Gastrocnemius medialis (tissue), 4 donors: ENCODE measurements at regions of chr2 and their contacts with region 1.

Region 1: GRCh38 chr2:20578895-20579825 is 71.7 kb downstream of the HS1BP3 start:
- DNase-seq: peak; percentile 87 to 89
- ATAC-seq: peak; percentile 94 to 95
- H3K4me3 ChIP-seq: peak overlapping the region in 1 of 4 donors; percentile 10
- H3K27ac ChIP-seq: peak overlapping the region; percentile 80 to 91 (median 82)
- H3K4me1 ChIP-seq: peaks cover 38 to 55% of the 10 kb centered on the region in 2 donors
- H3K27me3 ChIP-seq: no peaks in the 10 kb centered on the region
- CTCF ChIP-seq: no peak
- POLR2A ChIP-seq: no peak

Region 2: GRCh38 chr2:20198001-20198400 is 381.2 kb before region 1 on chr2:
- in situ Hi-C with region 1: no loop called
- intact Hi-C with region 1: no loop called
- DNase-seq: no peak
- ATAC-seq: no peak
- H3K4me3 ChIP-seq: no peak overlapping the region
- H3K27ac ChIP-seq: no peak overlapping the region
- H3K4me1 ChIP-seq: no peaks in the 10 kb centered on the region
- H3K27me3 ChIP-seq: no peaks in the 10 kb centered on the region
- CTCF ChIP-seq: no peak
- POLR2A ChIP-seq: no peak

Region 3: GRCh38 chr2:20551260-20551944 is 27.8 kb before region 1 on chr2:
- in situ Hi-C with region 1: no loop called
- intact Hi-C with region 1: loop called (anchors 2 kb)
- DNase-seq: peak; percentile 89 to 94
- ATAC-seq: peak; percentile 96 to 97
- H3K4me3 ChIP-seq: no peak overlapping the region
- H3K27ac ChIP-seq: peak overlapping the region; percentile 68 to 88 (median 75)
- H3K4me1 ChIP-seq: peaks cover 17 to 27% of the 10 kb centered on the region in 2 donors
- H3K27me3 ChIP-seq: no peaks in the 10 kb centered on the region
- CTCF ChIP-seq: no peak
- POLR2A ChIP-seq: no peak

Region 4: GRCh38 chr2:20617892-20618467 is 38.8 kb after region 1 on chr2:
- in situ Hi-C with region 1: no loop called
- intact Hi-C with region 1: loop called (anchors 1 kb)
- DNase-seq: peak; percentile 98 to 99
- ATAC-seq: peak; percentile 62 to 68
- H3K4me3 ChIP-seq: peak overlapping the region in 1 of 4 donors; percentile 1
- H3K27ac ChIP-seq: peak overlapping the region; percentile 87 to 95 (median 94)
- H3K4me1 ChIP-seq: peaks cover 72 to 92% of the 10 kb centered on the region in 2 donors
- H3K27me3 ChIP-seq: no peaks in the 10 kb centered on the region
- CTCF ChIP-seq: peak; percentile 69 to 81 (median 76)
- POLR2A ChIP-seq: peak; percentile 40 to 50